ENCODE measurements at regions of chr2 and their contacts with region 1.

Region 1: GRCh38 chr2:20595431-20596192 is 55.3 kb downstream of the HS1BP3 start:
- DNase-seq: peak; percentile 25 to 92
- H3K4me3 ChIP-seq: peak overlapping the region; percentile 5; the same call in 1 of the 2 replicates
- H3K27ac ChIP-seq: peak overlapping the region; percentile 96
- H3K4me1 ChIP-seq: peaks cover 76% of the 10 kb centered on the region
- H3K27me3 ChIP-seq: no peaks in the 10 kb centered on the region
- CTCF ChIP-seq: no peak; the same call in 1 of the 2 replicates

Region 2: DNA sequence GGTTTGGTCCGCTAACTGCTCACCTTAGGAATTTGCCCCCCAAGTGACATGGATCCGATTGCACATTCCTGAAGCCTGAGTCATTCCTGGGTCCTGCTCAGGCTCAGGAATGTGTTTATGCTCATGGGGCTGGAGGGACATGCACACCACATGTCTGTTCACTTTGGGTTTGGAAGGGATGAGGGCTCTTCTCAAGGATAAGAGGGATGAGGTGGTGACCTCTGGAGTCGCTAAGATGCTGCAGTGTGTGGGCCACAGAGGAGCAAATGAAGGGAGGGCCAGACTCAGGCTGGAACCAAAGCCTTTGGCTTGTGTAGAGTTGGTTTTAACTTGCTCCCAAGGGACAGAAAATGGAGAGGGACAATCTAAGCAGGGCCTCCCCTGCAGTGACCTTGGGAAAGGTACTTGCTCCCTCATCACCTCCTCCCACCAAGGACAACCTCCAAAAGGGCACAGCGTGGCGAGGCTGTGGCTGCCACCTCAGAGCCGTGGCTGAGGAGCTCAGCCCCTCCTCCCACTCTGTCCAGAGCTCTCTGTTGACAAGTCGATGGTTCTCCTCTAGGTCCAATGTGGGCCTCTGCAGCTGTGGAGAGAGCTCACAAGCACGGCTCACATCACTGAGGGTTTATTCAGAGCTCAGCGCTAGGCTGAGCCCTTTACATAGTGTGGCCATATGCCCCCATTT is 10.8 kb before region 1 on chr2:
- CTCF ChIA-PET with region 1: interaction called, 5 read pairs
- POLR2A ChIA-PET with region 1: no interaction called
- intact Hi-C with region 1: loop called (anchors 1 kb)
- DNase-seq: peak in 1 of 2 experiments; percentile 95
- H3K4me3 ChIP-seq: no peak overlapping the region
- H3K27ac ChIP-seq: peak overlapping the region; percentile 65
- H3K4me1 ChIP-seq: peaks cover 47% of the 10 kb centered on the region
- H3K27me3 ChIP-seq: no peaks in the 10 kb centered on the region
- CTCF ChIP-seq: no peak

Region 3: DNA sequence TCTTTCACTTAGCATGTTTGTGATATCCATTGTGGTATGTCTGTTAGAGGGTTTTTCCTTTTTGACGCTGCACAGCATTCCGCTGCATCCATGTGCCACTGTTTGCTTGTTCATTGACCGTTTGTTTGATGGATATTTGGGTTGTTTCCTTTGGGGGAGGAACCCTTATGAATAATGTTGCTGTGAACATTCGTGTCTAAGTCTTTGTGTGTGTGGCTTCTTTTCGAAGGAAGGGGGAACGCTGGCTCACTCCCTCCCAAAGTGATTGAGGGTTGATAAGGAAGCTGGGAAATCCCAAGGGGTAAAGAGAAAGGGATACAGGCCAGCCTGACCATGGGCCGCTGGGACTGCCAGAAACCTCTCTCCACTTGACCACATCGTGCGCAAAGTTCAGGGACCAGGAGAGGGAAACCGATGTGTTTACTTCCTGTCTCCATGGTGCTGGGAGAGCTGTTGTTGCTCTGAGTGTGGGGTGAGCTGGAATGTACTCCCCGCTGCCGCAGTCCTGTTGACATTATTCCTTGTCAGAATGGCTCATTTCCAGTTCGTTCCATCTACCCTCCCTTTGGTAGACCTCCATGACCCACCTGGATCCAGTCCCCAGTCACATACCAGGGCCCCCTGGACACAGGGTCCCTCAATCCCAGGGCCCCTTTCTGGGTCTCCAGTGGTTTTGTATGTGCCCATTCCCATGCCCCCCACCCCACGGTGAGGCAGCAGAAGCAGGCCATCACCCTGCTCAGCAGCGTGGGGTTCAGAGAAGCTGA is 15.6 kb after region 1 on chr2:
- CTCF ChIA-PET with region 1: interaction called, 10 read pairs
- POLR2A ChIA-PET with region 1: no interaction called
- intact Hi-C with region 1: no loop called
- DNase-seq: peak in 1 of 2 experiments; percentile 74
- H3K4me3 ChIP-seq: no peak overlapping the region
- H3K27ac ChIP-seq: no peak overlapping the region
- H3K4me1 ChIP-seq: peaks cover 22% of the 10 kb centered on the region
- H3K27me3 ChIP-seq: no peaks in the 10 kb centered on the region
- CTCF ChIP-seq: no peak

Region 4: DNA sequence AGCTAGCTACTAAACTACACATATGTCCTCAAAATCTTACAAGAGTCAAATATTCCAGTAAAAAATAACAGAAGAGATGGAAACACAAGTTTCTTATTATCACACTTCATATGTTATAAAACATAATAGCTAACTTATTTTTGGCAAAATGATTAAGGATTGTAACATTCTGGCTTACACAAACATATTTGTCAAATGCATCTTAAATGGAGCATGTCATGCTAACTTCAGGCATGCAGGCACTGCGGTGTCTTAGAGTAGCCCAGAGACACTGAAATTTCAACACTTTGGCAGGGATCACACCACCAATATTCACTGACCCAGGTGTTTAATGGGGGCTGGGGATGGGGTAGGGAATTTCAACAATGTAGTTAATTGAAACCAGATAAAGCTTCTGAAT is 175.7 kb after region 1 on chr2:
- CTCF ChIA-PET with region 1: no interaction called
- POLR2A ChIA-PET with region 1: no interaction called
- intact Hi-C with region 1: no loop called
- DNase-seq: no peak
- H3K4me3 ChIP-seq: no peak overlapping the region
- H3K27ac ChIP-seq: no peak overlapping the region
- H3K4me1 ChIP-seq: no peaks in the 10 kb centered on the region
- H3K27me3 ChIP-seq: no peaks in the 10 kb centered on the region
- CTCF ChIP-seq: no peak

Region 5: GRCh38 chr2:20796374-20796791 is 200.8 kb after region 1 on chr2:
- CTCF ChIA-PET with region 1: no interaction called
- POLR2A ChIA-PET with region 1: no interaction called
- intact Hi-C with region 1: no loop called
- DNase-seq: peak in 1 of 2 experiments; percentile 90
- H3K4me3 ChIP-seq: no peak overlapping the region
- H3K27ac ChIP-seq: peak overlapping the region; percentile 70
- H3K4me1 ChIP-seq: peaks cover 21% of the 10 kb centered on the region
- H3K27me3 ChIP-seq: no peaks in the 10 kb centered on the region
- CTCF ChIP-seq: no peak